ENCODE measurements at regions of chr2 and their contacts with region 1.

Region 1: DNA sequence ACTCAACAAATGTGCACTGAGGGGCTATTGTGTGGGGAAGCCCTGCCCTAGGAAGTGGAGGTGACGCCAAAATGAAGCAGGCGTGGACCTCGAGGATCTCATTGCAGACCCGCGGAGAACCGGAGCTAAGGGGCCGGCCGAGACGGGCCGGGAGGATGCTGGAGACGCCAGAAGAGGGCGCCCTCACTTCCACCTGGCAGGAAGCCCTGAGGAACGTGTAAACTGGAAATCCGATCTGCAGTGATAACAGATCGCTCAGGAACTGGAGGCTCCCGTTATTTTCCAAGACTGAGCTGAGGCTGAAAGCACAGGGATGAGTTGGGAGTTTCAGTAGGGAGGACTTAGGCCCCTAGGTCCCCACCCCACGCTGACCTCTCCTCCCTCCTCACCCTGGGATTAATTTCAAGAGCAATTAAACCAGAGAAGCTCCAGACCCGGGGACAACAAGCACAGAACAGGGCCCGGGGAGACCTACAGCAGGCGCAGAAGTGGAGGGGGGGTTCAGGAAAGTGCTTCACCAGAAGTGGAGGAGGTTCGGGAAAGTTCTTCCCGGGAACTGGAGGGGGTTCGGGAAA is 7.7 kb upstream of the COL6A3 start:
- DNase-seq: peak; percentile 65 to 92
- H3K4me3 ChIP-seq: no peak overlapping the region
- H3K27ac ChIP-seq: no peak overlapping the region
- H3K4me1 ChIP-seq: no peaks in the 10 kb centered on the region; a peak in 1 of 7 replicates
- H3K27me3 ChIP-seq: no peaks in the 10 kb centered on the region; a peak in 1 of 7 replicates
- CTCF ChIP-seq: peak; percentile 89 to 92 (median 89)
- EP300 ChIP-seq: no peak
- POLR2A ChIP-seq: no peak
- RAD21 ChIP-seq: peak; percentile 70 to 77

Region 2: GRCh38 chr2:236998236-236998635 is 423.4 kb before region 1 on chr2:
- CTCF ChIA-PET with region 1: no interaction called
- POLR2A ChIA-PET with region 1: no interaction called
- DNase-seq: no peak
- H3K4me3 ChIP-seq: no peak overlapping the region
- H3K27ac ChIP-seq: no peak overlapping the region
- H3K4me1 ChIP-seq: peaks cover 3 to 11% (median 4%) of the 10 kb centered on the region in 4 experiments; a peak in 5 of 7 replicates
- H3K27me3 ChIP-seq: no peaks in the 10 kb centered on the region
- CTCF ChIP-seq: no peak
- EP300 ChIP-seq: no peak
- POLR2A ChIP-seq: no peak
- RAD21 ChIP-seq: no peak

Region 3: GRCh38 chr2:237154082-237154638 is 267.5 kb before region 1 on chr2:
- CTCF ChIA-PET with region 1: interaction called, 17 read pairs
- POLR2A ChIA-PET with region 1: no interaction called
- DNase-seq: peak in 1 of 2 experiments; percentile 67
- H3K4me3 ChIP-seq: no peak overlapping the region
- H3K27ac ChIP-seq: no peak overlapping the region
- H3K4me1 ChIP-seq: no peaks in the 10 kb centered on the region; a peak in 2 of 7 replicates
- H3K27me3 ChIP-seq: no peaks in the 10 kb centered on the region
- CTCF ChIP-seq: peak; percentile 69 to 91 (median 78)
- EP300 ChIP-seq: no peak
- POLR2A ChIP-seq: no peak
- RAD21 ChIP-seq: peak; percentile 99

Region 4: GRCh38 chr2:237403024-237403882 is 18.4 kb before region 1 on chr2:
- CTCF ChIA-PET with region 1: interaction called, 53 read pairs
- POLR2A ChIA-PET with region 1: no interaction called
- DNase-seq: no peak
- H3K4me3 ChIP-seq: no peak overlapping the region
- H3K27ac ChIP-seq: no peak overlapping the region
- H3K4me1 ChIP-seq: no peaks in the 10 kb centered on the region
- H3K27me3 ChIP-seq: no peaks in the 10 kb centered on the region
- CTCF ChIP-seq: no peak
- EP300 ChIP-seq: no peak
- POLR2A ChIP-seq: no peak
- RAD21 ChIP-seq: no peak

Region 5: DNA sequence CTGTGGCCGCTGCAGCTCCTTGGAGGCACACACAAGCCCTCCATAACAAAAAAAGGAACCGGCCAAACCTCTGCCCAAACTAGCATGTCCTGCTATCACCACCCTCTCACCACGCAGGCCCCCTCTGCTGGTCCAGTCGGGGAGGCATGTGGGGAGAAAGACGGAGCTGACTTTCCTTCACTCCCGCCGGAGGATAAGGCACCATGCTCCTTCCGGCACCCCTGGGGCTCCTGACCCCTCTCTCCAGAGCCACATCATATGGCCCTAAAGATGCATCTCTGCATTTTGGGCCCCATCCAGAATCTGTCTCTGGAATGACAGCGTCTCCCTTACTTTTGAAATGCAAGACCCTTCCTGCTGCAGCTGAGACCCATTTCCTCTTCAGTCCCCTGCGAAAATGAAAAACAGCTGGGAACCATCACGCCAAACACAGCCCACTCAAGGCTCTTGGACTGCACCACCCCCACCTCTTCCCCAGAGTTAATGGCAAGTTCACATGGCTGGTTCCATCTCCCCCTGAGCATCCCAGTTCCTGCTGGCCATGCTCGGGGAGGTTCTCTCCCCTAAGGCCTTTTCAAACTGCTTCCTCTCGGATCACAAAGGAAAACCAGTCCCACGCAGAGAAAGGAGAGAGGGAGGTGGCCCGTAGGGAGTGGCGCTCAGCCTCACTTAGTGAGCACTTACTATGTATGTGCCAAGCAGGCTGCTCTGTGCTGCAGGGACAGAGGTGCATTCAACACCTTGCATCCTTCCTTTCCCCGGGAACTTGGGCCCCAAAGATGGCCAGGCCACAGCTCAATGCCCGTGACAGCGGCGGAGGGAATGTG is 30.2 kb after region 1 on chr2:
- CTCF ChIA-PET with region 1: interaction called, 36 read pairs
- POLR2A ChIA-PET with region 1: no interaction called
- DNase-seq: peak in 1 of 2 experiments; percentile 70
- H3K4me3 ChIP-seq: no peak overlapping the region
- H3K27ac ChIP-seq: no peak overlapping the region
- H3K4me1 ChIP-seq: peaks cover 0 to 6% (median 4%) of the 10 kb centered on the region in 4 experiments; a peak in 4 of 7 replicates
- H3K27me3 ChIP-seq: peaks cover 0 to 2% (median 0%) of the 10 kb centered on the region in 4 experiments; a peak in 1 of 7 replicates
- CTCF ChIP-seq: peak; percentile 62 to 71 (median 63)
- EP300 ChIP-seq: no peak
- POLR2A ChIP-seq: no peak
- RAD21 ChIP-seq: peak; percentile 54 to 60

Region 6: GRCh38 chr2:237474931-237475703 is 53.5 kb after region 1 on chr2:
- CTCF ChIA-PET with region 1: interaction called, 17 read pairs
- POLR2A ChIA-PET with region 1: no interaction called
- DNase-seq: peak in 1 of 2 experiments; percentile 97
- H3K4me3 ChIP-seq: peak overlapping the region; percentile 53 to 96 (median 64)
- H3K27ac ChIP-seq: peak overlapping the region; percentile 61; the same call in 1 of the 2 replicates
- H3K4me1 ChIP-seq: peaks cover 0 to 13% (median 7%) of the 10 kb centered on the region in 4 experiments; a peak in 4 of 7 replicates
- H3K27me3 ChIP-seq: peaks cover 0 to 7% (median 7%) of the 10 kb centered on the region in 4 experiments; a peak in 3 of 7 replicates
- CTCF ChIP-seq: peak; percentile 63 to 90 (median 77)
- EP300 ChIP-seq: no peak
- POLR2A ChIP-seq: peak in 1 of 2 experiments; percentile 59; a peak in 1 of 3 replicates
- RAD21 ChIP-seq: peak; percentile 46 to 70; a peak in 3 of 4 replicates

Measured in H1 (cell line).